Lower leg skin (tissue), 4 donors: ENCODE measurements at regions of chr10 and their contacts with region 1.

Region 1: GRCh38 chr10:75230600-75231038 is 5.1 kb downstream of the COMTD1 start:
- DNase-seq: peak; percentile 90 to 98
- H3K4me3 ChIP-seq: no peak overlapping the region
- CTCF ChIP-seq: peak in 1 of 3 donors; percentile 70
- POLR2A ChIP-seq: no peak

Region 2: GRCh38 chr10:75187961-75188426 is 42.6 kb before region 1 on chr10:
- intact Hi-C with region 1: loop called (anchors 5 kb)
- DNase-seq: peak; percentile 52 to 84
- H3K4me3 ChIP-seq: no peak overlapping the region
- CTCF ChIP-seq: no peak
- POLR2A ChIP-seq: no peak

Region 3: GRCh38 chr10:75887992-75888680 is 657.5 kb after region 1 on chr10:
- intact Hi-C with region 1: no loop called
- DNase-seq: no peak
- H3K4me3 ChIP-seq: no peak overlapping the region
- CTCF ChIP-seq: no peak
- POLR2A ChIP-seq: no peak